Esophagus muscularis mucosa (tissue), 4 donors: ENCODE measurements at regions of chr12 and their contacts with region 1.

Region 1: DNA sequence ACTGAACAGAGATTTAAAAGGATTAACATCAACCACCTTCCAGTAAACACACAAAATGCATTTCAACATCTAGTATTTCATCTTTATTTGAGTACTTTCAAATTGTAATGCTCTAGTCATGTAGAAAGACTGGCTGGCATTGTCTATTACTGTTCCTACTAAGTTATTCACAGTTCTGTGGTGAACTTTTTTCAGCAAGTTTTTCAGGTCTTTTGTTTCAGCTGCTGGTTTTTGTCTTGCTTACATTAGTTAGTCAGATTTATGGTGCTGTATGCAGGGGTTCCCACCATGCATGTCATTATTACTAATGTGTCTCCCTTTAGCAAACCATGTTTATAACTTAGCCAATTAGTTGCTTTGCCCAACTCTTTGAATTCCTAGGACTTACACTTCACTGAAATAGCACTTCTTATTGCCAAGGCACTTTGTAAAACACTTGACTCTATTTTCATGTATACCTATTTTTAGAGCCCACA is 253.4 kb upstream of the KITLG start:
- DNase-seq: no peak
- H3K4me3 ChIP-seq: no peak overlapping the region
- H3K27ac ChIP-seq: peak overlapping the region; percentile 52 to 65 (median 62)
- H3K4me1 ChIP-seq: peaks cover 6 to 26% (median 11%) of the 10 kb centered on the region in 4 donors
- H3K27me3 ChIP-seq: no peaks in the 10 kb centered on the region
- CTCF ChIP-seq: no peak
- EP300 ChIP-seq: no peak
- POLR2A ChIP-seq: no peak

Region 2: DNA sequence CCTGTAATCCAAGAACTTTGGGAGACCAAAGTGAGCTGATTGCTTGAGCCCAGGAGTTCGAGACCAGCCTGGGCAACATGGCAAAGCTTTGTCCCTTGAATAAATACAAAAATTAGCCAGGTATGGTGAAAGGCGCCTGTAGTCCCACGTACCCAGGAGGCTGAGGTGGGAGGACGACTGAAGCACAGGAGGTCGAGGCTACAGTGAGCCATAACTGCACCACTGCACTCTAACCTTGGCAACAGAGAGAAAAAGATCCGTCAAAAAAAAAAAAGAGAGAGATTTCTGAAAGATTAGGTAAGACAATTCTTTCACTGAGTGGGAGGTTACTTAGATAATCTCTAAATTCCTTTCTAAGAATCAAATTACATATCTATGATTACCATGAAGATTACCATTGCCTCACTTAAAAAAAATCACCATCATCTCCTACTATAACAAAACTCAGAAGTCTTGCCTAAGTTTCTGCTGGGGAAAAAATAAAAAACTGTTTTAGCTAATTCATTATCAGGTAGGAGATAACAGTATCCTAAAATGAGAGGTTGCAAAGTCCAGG is 151.9 kb after region 1 on chr12:
- intact Hi-C with region 1: loop called (anchors 10 kb)
- DNase-seq: no peak
- H3K4me3 ChIP-seq: no peak overlapping the region
- H3K27ac ChIP-seq: no peak overlapping the region
- H3K4me1 ChIP-seq: peaks cover 4 to 7% (median 5%) of the 10 kb centered on the region in 4 donors
- H3K27me3 ChIP-seq: no peaks in the 10 kb centered on the region
- CTCF ChIP-seq: no peak
- EP300 ChIP-seq: no peak
- POLR2A ChIP-seq: no peak